ENCODE measurements at regions of chr13 and their contacts with region 1.

Region 1: GRCh38 chr13:114314074-114314912 is at the start of gene CHAMP1:
- DNase-seq: peak; percentile 97
- ATAC-seq: peak; percentile 77
- H3K4me3 Mint-ChIP-seq: peak within 1 kb of the TSS; percentile 97
- H3K27ac Mint-ChIP-seq: peak within 1 kb of the TSS; percentile 98
- H3K4me1 Mint-ChIP-seq: peaks cover 43% of the 10 kb centered on the region
- H3K27me3 Mint-ChIP-seq: no peaks in the 10 kb centered on the region
- total RNA-seq, gene CHAMP1: 39.4 to 54.3 TPM

Region 2: DNA sequence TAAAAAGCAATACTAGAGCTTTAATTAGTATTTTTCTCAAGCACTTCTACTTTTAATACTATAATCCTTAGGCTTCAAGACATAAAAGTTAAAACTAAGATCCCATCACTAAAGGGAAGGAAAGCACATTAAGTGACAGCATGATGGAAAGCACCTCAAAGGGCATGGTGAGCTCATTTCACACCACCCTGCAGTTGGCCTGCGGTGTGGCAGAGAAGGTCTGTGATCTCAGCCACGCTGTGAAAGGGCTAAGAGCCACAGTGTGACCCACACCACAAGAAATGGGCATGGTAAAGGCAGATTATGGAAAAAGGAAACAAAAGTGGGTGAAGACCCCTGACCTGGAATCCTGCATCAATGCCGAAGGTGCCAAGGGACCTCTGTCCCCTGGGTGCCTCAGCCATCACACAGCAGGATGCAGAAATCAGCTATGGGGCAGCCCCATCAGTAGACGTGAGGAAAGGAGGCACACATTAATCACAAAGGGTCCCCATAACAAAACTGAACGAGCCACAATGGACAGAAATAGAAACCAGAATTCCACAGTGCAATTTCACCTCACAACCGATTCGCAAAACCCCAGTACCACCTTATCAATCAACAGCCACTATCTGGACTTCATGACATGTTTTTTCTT is 1760.0 kb before region 1 on chr13:
- CTCF ChIA-PET with region 1: no interaction called
- POLR2A ChIA-PET with region 1: no interaction called
- intact Hi-C with region 1: no loop called
- DNase-seq: no peak
- ATAC-seq: no peak
- H3K4me3 Mint-ChIP-seq: no peak overlapping the region
- H3K27ac Mint-ChIP-seq: no peak overlapping the region
- H3K4me1 Mint-ChIP-seq: no peaks in the 10 kb centered on the region
- H3K27me3 Mint-ChIP-seq: no peaks in the 10 kb centered on the region

Region 3: DNA sequence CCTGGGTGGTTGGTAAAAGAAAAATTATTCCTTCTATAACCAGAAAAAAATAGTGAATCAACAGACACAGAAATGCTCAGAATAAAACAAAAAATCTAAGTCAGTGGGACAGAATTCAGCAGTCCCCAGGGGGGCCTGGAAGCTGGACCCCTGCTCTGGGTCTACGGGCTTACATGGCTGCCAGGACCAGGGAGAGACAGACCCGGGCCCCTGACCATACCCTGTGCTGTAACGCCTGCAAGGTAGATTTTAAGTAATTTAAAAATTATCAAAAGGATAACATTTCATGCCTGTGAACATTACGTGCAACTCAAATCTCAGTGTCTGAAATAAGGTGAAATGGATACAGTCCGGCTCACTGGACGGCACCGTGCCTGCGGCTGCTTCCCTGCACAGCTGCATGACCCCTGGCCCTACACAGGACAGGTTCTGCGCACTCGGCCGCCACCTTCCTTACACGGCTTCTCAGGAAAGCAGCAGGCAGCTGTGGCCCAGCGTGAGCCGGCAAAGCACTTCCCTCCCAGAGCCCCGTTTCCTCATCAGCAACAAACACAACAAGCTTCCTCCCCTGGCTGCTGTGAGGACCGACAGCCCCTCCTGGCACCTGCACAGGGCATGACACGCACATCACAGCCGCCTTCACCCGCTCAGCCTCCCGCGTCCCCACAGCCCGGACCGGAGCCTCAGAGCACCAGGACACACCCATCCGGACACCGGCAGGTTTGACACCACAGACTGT is 204.0 kb before region 1 on chr13:
- CTCF ChIA-PET with region 1: no interaction called
- POLR2A ChIA-PET with region 1: no interaction called
- intact Hi-C with region 1: no loop called
- DNase-seq: peak; percentile 85
- ATAC-seq: peak; percentile 82
- H3K4me3 Mint-ChIP-seq: peak overlapping the region; percentile 74
- H3K27ac Mint-ChIP-seq: peak overlapping the region; percentile 90
- H3K4me1 Mint-ChIP-seq: peaks cover 81% of the 10 kb centered on the region
- H3K27me3 Mint-ChIP-seq: no peaks in the 10 kb centered on the region

Region 4: GRCh38 chr13:114132419-114133121 is 181.7 kb before region 1 on chr13 and contains the start of gene RASA3:
- CTCF ChIA-PET with region 1: no interaction called
- POLR2A ChIA-PET with region 1: no interaction called
- intact Hi-C with region 1: loop called in 1 of 2 experiments (anchors 1 kb)
- DNase-seq: peak; percentile 74
- ATAC-seq: peak; percentile 35
- H3K4me3 Mint-ChIP-seq: peak within 1 kb of the TSS; percentile 100
- H3K27ac Mint-ChIP-seq: peak within 1 kb of the TSS; percentile 95
- H3K4me1 Mint-ChIP-seq: peaks cover 39% of the 10 kb centered on the region
- H3K27me3 Mint-ChIP-seq: no peaks in the 10 kb centered on the region
- total RNA-seq, gene RASA3: 33.0 to 34.7 TPM

Region 5: DNA sequence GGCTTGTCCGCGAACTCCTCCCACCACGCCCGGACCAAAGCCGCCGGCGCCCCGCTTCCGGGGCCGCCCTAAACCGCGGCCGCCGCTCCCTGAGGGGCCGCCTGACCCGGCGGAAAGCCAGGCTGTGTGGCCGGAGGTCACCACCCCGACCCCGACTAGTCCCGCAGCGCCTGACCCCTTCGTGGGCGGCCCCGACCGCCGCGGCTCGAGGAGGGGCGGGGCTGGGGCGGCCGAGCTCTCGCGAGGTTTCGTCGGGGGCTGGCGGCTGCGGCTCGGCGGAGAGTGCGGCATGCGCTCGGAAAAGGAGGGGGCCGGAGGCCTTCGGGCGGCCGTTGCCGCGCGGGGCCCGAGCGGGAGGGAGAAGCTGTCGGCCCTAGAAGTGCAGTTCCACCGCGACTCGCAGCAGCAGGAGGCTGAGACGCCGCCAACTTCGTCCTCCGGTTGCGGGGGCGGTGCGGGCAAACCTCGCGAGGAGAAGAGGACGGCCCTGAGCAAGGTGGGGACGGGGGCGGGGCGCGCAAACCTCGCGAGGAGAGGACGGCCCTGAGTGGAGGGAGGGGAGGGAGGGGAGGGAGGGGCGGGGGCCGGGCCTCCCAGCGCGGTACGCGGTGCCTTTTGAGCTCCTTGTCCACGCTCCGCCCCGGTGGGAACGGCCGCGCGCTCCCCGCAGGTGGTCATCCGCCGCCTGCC is 32.8 kb before region 1 on chr13 and contains the start of gene UPF3A:
- CTCF ChIA-PET with region 1: interaction called, 3 read pairs
- POLR2A ChIA-PET with region 1: interaction called, 12 read pairs
- intact Hi-C with region 1: loop called (anchors 1 to 2 kb)
- DNase-seq: peak; percentile 95
- ATAC-seq: peak; percentile 83
- H3K4me3 Mint-ChIP-seq: peak within 1 kb of the TSS; percentile 84
- H3K27ac Mint-ChIP-seq: peak within 1 kb of the TSS; percentile 99
- H3K4me1 Mint-ChIP-seq: peaks cover 49% of the 10 kb centered on the region
- H3K27me3 Mint-ChIP-seq: no peaks in the 10 kb centered on the region
- total RNA-seq, gene UPF3A: 41.1 to 43.3 TPM

Region 6: DNA sequence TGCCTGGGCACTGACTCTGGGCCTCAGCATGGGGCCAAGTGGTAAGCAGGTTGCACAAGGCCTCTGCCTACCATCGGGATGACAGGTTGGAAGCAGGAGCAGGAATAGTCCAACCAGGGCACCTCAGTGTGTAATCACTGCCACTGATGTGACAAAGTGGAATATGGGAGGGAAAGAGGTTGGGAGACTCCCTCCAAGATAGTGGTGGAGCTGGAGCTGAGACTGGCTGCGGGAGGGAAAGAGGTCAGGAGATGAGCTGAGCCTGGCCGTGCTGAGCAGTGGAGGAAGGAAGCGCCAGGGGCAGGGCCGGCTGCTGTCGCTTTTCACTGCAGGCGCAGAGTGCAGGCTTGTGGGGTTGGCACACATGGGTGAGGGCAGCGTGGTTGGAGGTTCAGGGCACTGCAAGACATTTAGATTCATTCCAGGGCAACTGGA is 26.1 kb before region 1 on chr13:
- CTCF ChIA-PET with region 1: no interaction called
- POLR2A ChIA-PET with region 1: interaction called, 11 read pairs
- intact Hi-C with region 1: loop called in 1 of 2 experiments (anchors 1 kb)
- DNase-seq: no peak
- ATAC-seq: no peak
- H3K4me3 Mint-ChIP-seq: no peak overlapping the region
- H3K27ac Mint-ChIP-seq: no peak overlapping the region
- H3K4me1 Mint-ChIP-seq: peaks cover 28% of the 10 kb centered on the region
- H3K27me3 Mint-ChIP-seq: no peaks in the 10 kb centered on the region

Measured in activated CD4-positive, alpha-beta T cell treated with anti-CD3 and anti-CD28 coated beads for 36 hours (primary cell).